Right ventricle myocardium inferior (tissue), 1 donor: ENCODE measurements at regions of chr16 and their contacts with region 1.

Region 1: GRCh38 chr16:58755989-58756649 is 22.0 kb upstream of the GOT2 start:
- DNase-seq: no peak
- ATAC-seq: peak; percentile 94

Region 2: GRCh38 chr16:58684354-58685083 is 71.6 kb before region 1 on chr16 and contains the start of gene SLC38A7:
- intact Hi-C with region 1: loop called (anchors 1 kb)
- DNase-seq: peak; percentile 94
- ATAC-seq: peak; percentile 93
- total RNA-seq, gene SLC38A7: 32.7 TPM

Region 3: DNA sequence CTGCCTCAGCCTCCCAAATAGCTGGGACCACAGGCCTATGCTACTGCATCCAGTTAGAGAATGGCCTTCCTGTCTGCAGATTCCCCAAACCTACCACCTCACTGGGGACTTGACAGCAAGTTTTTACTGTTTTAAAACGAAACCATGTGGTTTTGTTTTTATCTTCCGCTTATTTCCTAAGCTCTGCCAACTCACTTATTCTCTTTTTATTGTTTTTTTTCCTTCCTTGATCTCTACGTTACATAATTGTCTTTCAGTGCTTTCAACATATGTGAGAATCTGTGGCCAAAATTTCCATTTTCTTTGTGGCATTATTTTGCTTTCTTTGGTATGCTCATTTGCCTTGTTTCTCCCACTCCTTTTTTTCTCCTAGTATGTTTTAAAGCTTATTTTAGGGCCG is 57.0 kb before region 1 on chr16:
- intact Hi-C with region 1: no loop called
- DNase-seq: no peak
- ATAC-seq: no peak